Naive thymus-derived CD8-positive, alpha-beta T cell (primary cell): ENCODE measurements at regions of chr19 and their contacts with region 1.

Region 1: GRCh38 chr19:7348587-7349230 is at the start of gene ARHGEF18:
- DNase-seq: peak; percentile 37 to 91 (median 66)
- ATAC-seq: peak; percentile 63 to 74
- H3K4me3 Mint-ChIP-seq: peak within 1 kb of the TSS; percentile 94 to 100 (median 98)
- H3K27ac Mint-ChIP-seq: peak within 1 kb of the TSS; percentile 95 to 100 (median 99)
- H3K4me1 Mint-ChIP-seq: peaks cover 46 to 85% (median 73%) of the 10 kb centered on the region in 4 donors
- H3K27me3 Mint-ChIP-seq: no peaks in the 10 kb centered on the region
- polyA plus RNA-seq, gene ARHGEF18: 3.2 to 10.6 (median 5.6) TPM

Region 2: GRCh38 chr19:7069042-7069903 is 279.4 kb before region 1 on chr19 and contains the start of gene ZNF557:
- POLR2A ChIA-PET with region 1: interaction called, 20 read pairs
- DNase-seq: peak; percentile 98 to 100 (median 99)
- ATAC-seq: peak; percentile 93 to 95
- H3K4me3 Mint-ChIP-seq: peak within 1 kb of the TSS; percentile 87 to 98 (median 96)
- H3K27ac Mint-ChIP-seq: peak within 1 kb of the TSS; percentile 82 to 97 (median 96)
- H3K4me1 Mint-ChIP-seq: peaks cover 9 to 29% (median 23%) of the 10 kb centered on the region in 4 donors
- H3K27me3 Mint-ChIP-seq: no peaks in the 10 kb centered on the region
- polyA plus RNA-seq, gene ZNF557: 4.4 to 7.5 (median 7.4) TPM

Region 3: GRCh38 chr19:7098701-7099596 is 249.8 kb before region 1 on chr19:
- POLR2A ChIA-PET with region 1: interaction called, 15 read pairs
- DNase-seq: peak; percentile 82 to 95 (median 88)
- ATAC-seq: peak; percentile 92 to 93
- H3K4me3 Mint-ChIP-seq: peak overlapping the region; percentile 89 to 99 (median 94)
- H3K27ac Mint-ChIP-seq: peak overlapping the region; percentile 60 to 98 (median 95)
- H3K4me1 Mint-ChIP-seq: peaks cover 11 to 35% (median 32%) of the 10 kb centered on the region in 4 donors
- H3K27me3 Mint-ChIP-seq: no peaks in the 10 kb centered on the region

Region 4: GRCh38 chr19:7360393-7360984 is 11.8 kb after region 1 on chr19:
- POLR2A ChIA-PET with region 1: interaction called, 49 read pairs
- DNase-seq: no peak
- ATAC-seq: no peak
- H3K4me3 Mint-ChIP-seq: no peak overlapping the region
- H3K27ac Mint-ChIP-seq: peak overlapping the region in 9 of 10 donors; percentile 21 to 92 (median 59)
- H3K4me1 Mint-ChIP-seq: peaks cover 46 to 94% (median 78%) of the 10 kb centered on the region in 4 donors
- H3K27me3 Mint-ChIP-seq: no peaks in the 10 kb centered on the region

Region 5: GRCh38 chr19:7366701-7367420 is 18.2 kb after region 1 on chr19:
- POLR2A ChIA-PET with region 1: interaction called, 49 read pairs
- DNase-seq: peak in 1 of 10 donors; percentile 11
- ATAC-seq: no peak
- H3K4me3 Mint-ChIP-seq: no peak overlapping the region
- H3K27ac Mint-ChIP-seq: peak overlapping the region; percentile 28 to 97 (median 60)
- H3K4me1 Mint-ChIP-seq: peaks cover 32 to 57% (median 46%) of the 10 kb centered on the region in 4 donors
- H3K27me3 Mint-ChIP-seq: no peaks in the 10 kb centered on the region

Region 6: GRCh38 chr19:7376151-7376852 is 27.6 kb after region 1 on chr19:
- POLR2A ChIA-PET with region 1: interaction called, 13 read pairs
- DNase-seq: no peak
- ATAC-seq: no peak
- H3K4me3 Mint-ChIP-seq: peak overlapping the region in 1 of 10 donors; percentile 16
- H3K27ac Mint-ChIP-seq: peak overlapping the region in 7 of 10 donors; percentile 25 to 76 (median 61)
- H3K4me1 Mint-ChIP-seq: peaks cover 8 to 24% (median 13%) of the 10 kb centered on the region in 4 donors
- H3K27me3 Mint-ChIP-seq: no peaks in the 10 kb centered on the region

Region 7: GRCh38 chr19:7394731-7395359 is 46.1 kb after region 1 on chr19:
- POLR2A ChIA-PET with region 1: interaction called, 40 read pairs
- DNase-seq: peak; percentile 80 to 97 (median 92)
- ATAC-seq: peak; percentile 86 to 88
- H3K4me3 Mint-ChIP-seq: peak overlapping the region; percentile 80 to 93 (median 84)
- H3K27ac Mint-ChIP-seq: peak overlapping the region in 9 of 10 donors; percentile 53 to 93 (median 88)
- H3K4me1 Mint-ChIP-seq: peaks cover 17 to 60% (median 45%) of the 10 kb centered on the region in 4 donors
- H3K27me3 Mint-ChIP-seq: no peaks in the 10 kb centered on the region

Region 8: GRCh38 chr19:7415163-7415858 is 66.6 kb after region 1 on chr19:
- POLR2A ChIA-PET with region 1: no interaction called
- DNase-seq: no peak
- ATAC-seq: no peak
- H3K4me3 Mint-ChIP-seq: no peak overlapping the region
- H3K27ac Mint-ChIP-seq: peak overlapping the region in 6 of 10 donors; percentile 14 to 73 (median 64)
- H3K4me1 Mint-ChIP-seq: peaks cover 26 to 57% (median 39%) of the 10 kb centered on the region in 4 donors
- H3K27me3 Mint-ChIP-seq: no peaks in the 10 kb centered on the region